ENCODE measurements at regions of chr18 and their contacts with region 1.

Region 1: GRCh38 chr18:70446063-70446462 is 157.2 kb downstream of the SOCS6 start:
- DNase-seq: no peak
- H3K4me3 ChIP-seq: no peak overlapping the region
- H3K4me3 Mint-ChIP-seq: no peak overlapping the region
- H3K27ac ChIP-seq: no peak overlapping the region
- H3K27ac Mint-ChIP-seq: no peak overlapping the region
- H3K4me1 ChIP-seq: no peaks in the 10 kb centered on the region
- H3K4me1 Mint-ChIP-seq: no peaks in the 10 kb centered on the region
- H3K27me3 ChIP-seq: no peaks in the 10 kb centered on the region
- H3K27me3 Mint-ChIP-seq: peaks cover 0 to 2% of the 10 kb centered on the region in 2 donors

Region 2: DNA sequence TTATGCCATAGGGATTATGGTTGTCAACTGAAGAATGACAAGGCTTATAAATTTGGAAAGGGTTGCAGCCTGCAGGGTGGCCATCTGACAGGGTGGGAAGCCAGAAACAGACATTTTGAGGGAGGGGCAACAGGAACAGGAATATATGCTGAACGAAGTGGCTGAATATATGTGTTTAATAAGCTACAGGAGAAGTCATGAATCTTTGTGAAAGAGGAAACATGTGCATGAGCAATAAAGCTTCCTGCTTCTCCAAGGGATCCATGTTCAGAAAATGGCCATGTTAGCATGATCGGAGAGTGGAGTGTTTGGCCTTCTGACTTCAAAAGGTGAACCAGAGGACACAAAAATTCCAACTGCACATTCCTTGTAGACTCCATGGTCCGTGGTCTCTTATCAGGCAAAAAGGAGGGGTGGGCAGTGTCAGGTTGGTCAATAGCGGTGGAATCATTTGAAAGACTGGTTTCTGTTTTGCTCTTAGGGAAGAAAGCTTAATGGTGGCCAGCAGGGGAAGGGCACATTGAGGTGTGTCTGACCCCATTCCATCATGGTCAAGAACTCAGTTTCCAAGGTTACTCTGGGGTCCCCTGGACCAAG is 13.2 kb before region 1 on chr18:
- CTCF ChIA-PET with region 1: interaction called, 11 read pairs
- POLR2A ChIA-PET with region 1: no interaction called
- intact Hi-C with region 1: no loop called
- DNase-seq: no peak
- H3K4me3 ChIP-seq: no peak overlapping the region
- H3K4me3 Mint-ChIP-seq: no peak overlapping the region
- H3K27ac ChIP-seq: no peak overlapping the region
- H3K27ac Mint-ChIP-seq: no peak overlapping the region
- H3K4me1 ChIP-seq: no peaks in the 10 kb centered on the region
- H3K4me1 Mint-ChIP-seq: no peaks in the 10 kb centered on the region
- H3K27me3 ChIP-seq: no peaks in the 10 kb centered on the region
- H3K27me3 Mint-ChIP-seq: no peaks in the 10 kb centered on the region

Measured in CD4-positive, alpha-beta memory T cell (primary cell).